ENCODE measurements at regions of chr11 and their contacts with region 1.

Region 1: GRCh38 chr11:109165035-109165434 is 257.0 kb upstream of the C11orf87 start:
- DNase-seq: no peak
- H3K4me3 ChIP-seq: no peak overlapping the region
- H3K4me3 Mint-ChIP-seq: no peak overlapping the region
- H3K27ac Mint-ChIP-seq: no peak overlapping the region
- H3K4me1 ChIP-seq: peaks cover 14% of the 10 kb centered on the region
- H3K4me1 Mint-ChIP-seq: peaks cover 9% of the 10 kb centered on the region
- H3K27me3 ChIP-seq: no peaks in the 10 kb centered on the region
- H3K27me3 Mint-ChIP-seq: peaks cover 14% of the 10 kb centered on the region
- CTCF ChIP-seq: no peak

Region 2: GRCh38 chr11:109197656-109198055 is 32.6 kb after region 1 on chr11:
- CTCF ChIA-PET with region 1: no interaction called
- POLR2A ChIA-PET with region 1: no interaction called
- intact Hi-C with region 1: loop called (anchors 1 kb)
- DNase-seq: no peak
- H3K4me3 ChIP-seq: no peak overlapping the region
- H3K4me3 Mint-ChIP-seq: no peak overlapping the region
- H3K27ac Mint-ChIP-seq: no peak overlapping the region
- H3K4me1 ChIP-seq: no peaks in the 10 kb centered on the region
- H3K4me1 Mint-ChIP-seq: no peaks in the 10 kb centered on the region
- H3K27me3 ChIP-seq: no peaks in the 10 kb centered on the region
- H3K27me3 Mint-ChIP-seq: peaks cover 12% of the 10 kb centered on the region
- CTCF ChIP-seq: no peak